ENCODE measurements at regions of chr15 and their contacts with region 1.

Region 1: GRCh38 chr15:40440743-40441564 is at the start of gene BAHD1:
- DNase-seq: peak; percentile 85 to 97
- H3K4me3 ChIP-seq: peak within 1 kb of the TSS; percentile 95 to 97
- H3K27ac ChIP-seq: peak within 1 kb of the TSS; percentile 31 to 75
- H3K4me1 ChIP-seq: peaks cover 12 to 33% of the 10 kb centered on the region in 2 donors
- H3K27me3 ChIP-seq: peaks cover 11% of the 10 kb centered on the region
- CTCF ChIP-seq: peak in 1 of 3 experiments; percentile 28
- total RNA-seq, gene BAHD1: 10.6 TPM

Region 2: GRCh38 chr15:40421246-40422157 is 19.5 kb before region 1 on chr15:
- intact Hi-C with region 1: no loop called
- DNase-seq: peak in 1 of 2 donors; percentile 81
- H3K4me3 ChIP-seq: peak overlapping the region in 1 of 2 donors; percentile 45
- H3K27ac ChIP-seq: no peak overlapping the region
- H3K4me1 ChIP-seq: peaks cover 5 to 13% of the 10 kb centered on the region in 2 donors
- H3K27me3 ChIP-seq: no peaks in the 10 kb centered on the region
- CTCF ChIP-seq: peak; percentile 94 to 97 (median 94)

Region 3: DNA sequence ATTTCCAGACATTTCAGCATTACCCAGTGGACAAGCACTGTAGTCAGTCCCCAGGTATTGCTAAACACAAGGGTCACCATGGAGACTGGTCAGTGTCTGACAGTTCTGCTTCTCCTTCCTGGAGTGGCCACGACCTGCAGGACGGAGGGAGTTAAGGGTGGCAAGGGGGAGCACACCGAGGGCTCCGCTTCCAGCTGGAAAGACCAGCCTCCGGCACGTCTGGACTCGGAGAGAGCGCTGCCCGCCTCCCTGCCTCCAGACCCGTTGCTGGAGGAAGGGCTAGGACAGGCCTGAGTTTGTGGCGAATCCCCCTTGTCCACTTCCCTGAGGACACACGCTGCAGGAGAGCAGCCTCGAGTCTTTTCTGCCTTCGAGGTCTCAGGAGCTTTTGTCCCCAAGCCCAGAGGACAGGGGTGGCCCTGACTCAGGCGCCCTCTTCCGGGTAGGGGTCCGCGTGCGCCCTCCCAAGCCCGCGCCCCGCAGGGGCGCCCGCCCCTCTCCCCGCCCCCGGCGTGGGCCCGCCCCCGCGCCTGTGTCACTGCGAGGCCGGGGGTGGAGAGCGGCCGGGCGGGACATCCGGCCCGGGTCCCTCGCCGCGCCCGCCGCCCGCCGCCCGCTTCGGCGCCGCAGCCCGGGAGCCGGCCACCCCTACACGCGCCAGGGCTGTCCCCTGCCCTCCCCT is 29.6 kb after region 1 on chr15 and contains the start of gene CHST14:
- intact Hi-C with region 1: loop called (anchors 1 kb)
- DNase-seq: peak in 1 of 2 donors; percentile 78
- H3K4me3 ChIP-seq: peak within 1 kb of the TSS; percentile 74 to 89
- H3K27ac ChIP-seq: peak within 1 kb of the TSS; percentile 83 to 87
- H3K4me1 ChIP-seq: peaks cover 7 to 13% of the 10 kb centered on the region in 2 donors
- H3K27me3 ChIP-seq: no peaks in the 10 kb centered on the region
- CTCF ChIP-seq: no peak
- total RNA-seq, gene CHST14: 22.0 TPM

Region 4: GRCh38 chr15:40506964-40507571 is 66.1 kb after region 1 on chr15:
- intact Hi-C with region 1: loop called (anchors 5 kb)
- DNase-seq: peak in 1 of 2 donors; percentile 82
- H3K4me3 ChIP-seq: peak overlapping the region; percentile 48 to 57
- H3K27ac ChIP-seq: no peak overlapping the region
- H3K4me1 ChIP-seq: peaks cover 0 to 11% of the 10 kb centered on the region in 2 donors
- H3K27me3 ChIP-seq: no peaks in the 10 kb centered on the region
- CTCF ChIP-seq: peak; percentile 47 to 72 (median 68)

Region 5: GRCh38 chr15:40593588-40594428 is 152.9 kb after region 1 on chr15 and contains the start of gene KNL1:
- intact Hi-C with region 1: loop called (anchors 2 kb)
- DNase-seq: peak; percentile 72 to 96
- H3K4me3 ChIP-seq: peak within 1 kb of the TSS; percentile 50 to 73
- H3K27ac ChIP-seq: peak within 1 kb of the TSS; percentile 78 to 87
- H3K4me1 ChIP-seq: peaks cover 0 to 9% of the 10 kb centered on the region in 2 donors
- H3K27me3 ChIP-seq: no peaks in the 10 kb centered on the region
- CTCF ChIP-seq: no peak
- total RNA-seq, gene KNL1: not detected